Brain microvascular endothelial cell (primary cell): ENCODE measurements at regions of chr20 and their contacts with region 1.

Region 1: DNA sequence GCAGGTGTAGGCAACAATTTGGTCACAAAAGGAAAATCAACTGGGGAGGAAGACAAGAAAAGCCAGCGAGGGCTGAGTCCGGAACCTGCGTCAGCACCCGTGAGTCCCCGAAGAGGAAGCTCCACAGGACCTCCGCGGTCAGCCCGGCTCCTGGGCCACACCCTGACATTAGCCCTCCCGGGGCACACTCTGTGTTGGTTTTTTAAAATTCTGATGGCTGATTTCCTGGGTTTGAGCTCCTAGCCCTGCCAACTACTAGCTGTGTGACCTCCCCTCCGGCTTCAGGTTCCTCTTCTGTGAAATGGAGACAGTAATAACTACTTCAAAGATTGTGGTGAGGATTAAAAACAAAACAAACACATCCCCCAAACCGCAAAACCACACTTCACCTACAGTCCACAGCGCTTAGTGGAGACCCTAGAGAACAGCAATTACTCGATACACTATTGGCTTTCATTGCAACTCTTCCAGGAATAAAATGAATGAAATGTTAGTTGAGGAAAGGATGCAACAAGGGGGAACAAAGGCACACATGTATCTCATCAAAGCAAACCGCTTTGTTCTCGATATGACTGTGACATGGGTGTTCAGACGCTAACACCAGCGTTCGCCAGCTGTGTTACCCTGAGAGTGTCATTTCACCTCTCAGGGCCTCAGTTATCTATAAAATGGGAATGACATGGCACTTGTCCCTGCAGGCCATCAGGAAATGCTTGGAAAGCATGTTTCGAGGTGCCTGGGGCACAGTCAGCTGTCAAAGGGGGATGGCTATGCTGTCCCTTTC is 983 bp downstream of the ZBP1 start:
- DNase-seq: no peak
- H3K4me3 ChIP-seq: no peak overlapping the region
- H3K27ac ChIP-seq: no peak overlapping the region
- H3K27me3 ChIP-seq: peaks cover 3% of the 10 kb centered on the region
- CTCF ChIP-seq: no peak

Region 2: DNA sequence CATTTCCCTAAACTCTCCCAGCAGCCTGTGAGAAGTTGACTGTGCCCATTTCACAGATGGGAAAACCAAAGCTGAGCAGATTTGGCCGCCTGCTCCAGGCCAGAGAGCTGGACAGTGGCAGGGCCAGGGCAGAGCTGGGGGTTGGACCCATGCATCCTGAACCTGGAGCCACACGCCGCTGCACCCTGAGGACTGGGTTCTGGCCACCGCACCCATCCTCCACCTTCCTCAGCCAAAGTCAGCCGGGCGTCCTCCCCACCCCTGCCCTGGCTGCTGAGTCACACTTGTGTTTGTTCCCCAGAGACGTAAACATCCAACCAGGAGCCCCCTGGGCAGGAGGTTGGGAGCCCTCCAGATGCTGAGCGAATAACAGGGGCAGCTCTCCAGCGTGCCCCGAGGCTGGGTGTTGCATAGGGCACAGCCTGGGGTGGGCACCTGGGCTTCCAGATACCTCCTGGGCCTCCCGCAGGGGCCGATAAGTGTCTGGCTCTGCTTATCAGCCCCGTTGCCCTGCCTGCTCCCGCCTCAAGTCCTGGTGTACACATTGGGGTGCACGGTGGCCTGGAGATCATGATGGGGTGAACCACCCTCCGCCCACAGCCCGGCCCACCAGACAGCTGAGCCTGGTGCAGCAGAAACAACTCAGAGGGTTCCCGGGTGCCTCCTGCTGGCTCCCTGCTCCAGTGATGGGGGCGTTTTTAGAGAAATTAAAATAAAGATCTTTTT is 204.2 kb before region 1 on chr20:
- in situ Hi-C with region 1: no loop called
- DNase-seq: no peak
- H3K4me3 ChIP-seq: no peak overlapping the region
- H3K27ac ChIP-seq: no peak overlapping the region
- H3K27me3 ChIP-seq: peaks cover 2% of the 10 kb centered on the region
- CTCF ChIP-seq: no peak

Region 3: DNA sequence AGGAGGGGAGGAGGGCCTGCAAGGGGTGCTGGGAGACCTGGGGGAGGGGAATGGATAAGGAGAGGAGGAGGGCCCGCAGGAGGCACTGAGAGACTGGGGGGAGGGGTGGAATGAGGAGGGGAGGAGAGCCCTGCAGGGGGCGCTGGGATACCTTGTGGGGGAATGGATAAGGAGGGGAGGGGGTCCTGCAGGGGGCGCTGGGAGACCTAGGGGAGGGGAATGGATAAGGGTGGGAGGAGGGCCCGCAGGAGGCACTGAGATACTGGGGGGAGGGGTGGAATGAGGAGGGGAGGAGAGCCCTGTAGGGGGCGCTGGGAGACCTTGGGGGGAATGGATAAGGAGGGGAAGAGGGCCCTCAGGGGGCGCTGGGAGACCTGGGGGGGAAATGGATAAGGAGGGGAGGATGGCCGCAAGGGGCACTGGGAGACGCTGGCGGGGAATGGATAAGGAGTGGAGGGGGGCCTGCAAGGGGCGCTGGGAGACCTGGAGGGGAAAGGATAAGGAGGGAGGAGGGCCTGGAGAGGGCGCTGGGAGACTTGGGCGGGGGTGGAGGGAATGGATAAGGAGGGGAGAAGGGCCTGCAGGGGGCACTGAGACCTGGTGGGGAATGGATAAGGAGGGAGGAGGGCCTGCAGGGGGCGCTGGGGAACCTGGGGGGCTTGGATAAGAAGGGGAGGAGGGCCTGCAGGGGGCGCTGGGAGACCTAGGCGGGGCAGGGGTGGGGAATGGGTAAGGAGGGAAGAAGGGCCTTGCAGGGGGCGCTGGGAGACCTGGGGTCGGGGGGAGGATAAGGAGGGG is 93.0 kb before region 1 on chr20:
- in situ Hi-C with region 1: no loop called
- DNase-seq: no peak
- H3K4me3 ChIP-seq: no peak overlapping the region
- H3K27ac ChIP-seq: no peak overlapping the region
- H3K27me3 ChIP-seq: no peaks in the 10 kb centered on the region
- CTCF ChIP-seq: peak; percentile 34

Region 4: DNA sequence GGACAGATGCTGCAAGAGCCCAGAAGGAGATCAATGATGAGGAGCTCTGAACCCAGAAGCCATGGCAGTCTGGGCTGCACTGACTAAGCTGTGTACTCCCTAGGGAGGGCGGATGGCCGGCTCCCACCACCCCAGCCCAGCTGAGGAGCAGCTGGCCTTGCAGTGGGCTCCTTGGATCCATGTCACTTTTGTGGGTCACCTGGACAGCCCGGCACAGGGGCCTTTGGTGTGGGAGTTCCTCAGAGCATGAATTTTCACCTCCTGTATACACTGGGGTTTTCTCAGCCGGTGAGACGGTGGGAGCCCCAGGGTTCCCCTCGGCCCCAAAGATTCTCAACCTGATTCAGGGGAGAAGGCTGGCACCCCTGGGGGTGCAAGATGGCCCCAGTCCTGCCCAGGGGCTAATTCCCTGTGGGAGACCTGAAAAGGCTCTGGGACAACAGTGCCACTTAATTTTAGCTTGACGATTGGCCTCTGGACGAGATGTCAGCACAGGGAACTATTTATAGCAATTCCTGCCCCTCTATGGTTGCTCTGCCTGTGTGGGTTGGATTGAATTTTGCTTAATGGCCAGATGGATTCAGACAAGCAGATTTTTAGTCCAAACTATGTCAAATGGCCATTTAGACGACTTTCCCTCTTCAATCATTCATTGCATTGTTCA is 212.2 kb after region 1 on chr20:
- in situ Hi-C with region 1: no loop called
- DNase-seq: no peak
- H3K4me3 ChIP-seq: no peak overlapping the region
- H3K27ac ChIP-seq: no peak overlapping the region
- H3K27me3 ChIP-seq: peaks cover 2% of the 10 kb centered on the region
- CTCF ChIP-seq: no peak

Region 5: GRCh38 chr20:58179432-58180099 is 560.3 kb after region 1 on chr20:
- in situ Hi-C with region 1: loop called (anchors 10 kb)
- DNase-seq: peak; percentile 15
- H3K4me3 ChIP-seq: peak overlapping the region; percentile 43
- H3K27ac ChIP-seq: no peak overlapping the region
- H3K27me3 ChIP-seq: no peaks in the 10 kb centered on the region
- CTCF ChIP-seq: peak; percentile 74